Activated T-helper 1 cell treated with anti-CD3 and anti-CD28 coated beads, Interleukin-12 subunit alpha, Interleukin-12 subunit beta, Interleukin-2, Interleukin-4 antibody, amounts not matched to agents 30 ng/mL and 10 ng/mL and 1 ng/mL, durations not matched to agents 14 hours and 24 hours and 36 hours (primary cell): ENCODE measurements at regions of chr1 and their contacts with region 1.

Region 1: GRCh38 chr1:110619412-110620249 is 13.5 kb upstream of the KCNA2 start:
- DNase-seq: peak; percentile 87
- H3K4me3 Mint-ChIP-seq: peak overlapping the region; percentile 83
- H3K27ac Mint-ChIP-seq: peak overlapping the region; percentile 90
- H3K4me1 Mint-ChIP-seq: peaks cover 63% of the 10 kb centered on the region
- H3K27me3 Mint-ChIP-seq: peaks cover 4% of the 10 kb centered on the region

Region 2: GRCh38 chr1:110293601-110294104 is 326.0 kb before region 1 on chr1:
- intact Hi-C with region 1: no loop called
- DNase-seq: no peak
- H3K4me3 Mint-ChIP-seq: no peak overlapping the region
- H3K27ac Mint-ChIP-seq: no peak overlapping the region
- H3K4me1 Mint-ChIP-seq: no peaks in the 10 kb centered on the region
- H3K27me3 Mint-ChIP-seq: peaks cover 9% of the 10 kb centered on the region

Region 3: DNA sequence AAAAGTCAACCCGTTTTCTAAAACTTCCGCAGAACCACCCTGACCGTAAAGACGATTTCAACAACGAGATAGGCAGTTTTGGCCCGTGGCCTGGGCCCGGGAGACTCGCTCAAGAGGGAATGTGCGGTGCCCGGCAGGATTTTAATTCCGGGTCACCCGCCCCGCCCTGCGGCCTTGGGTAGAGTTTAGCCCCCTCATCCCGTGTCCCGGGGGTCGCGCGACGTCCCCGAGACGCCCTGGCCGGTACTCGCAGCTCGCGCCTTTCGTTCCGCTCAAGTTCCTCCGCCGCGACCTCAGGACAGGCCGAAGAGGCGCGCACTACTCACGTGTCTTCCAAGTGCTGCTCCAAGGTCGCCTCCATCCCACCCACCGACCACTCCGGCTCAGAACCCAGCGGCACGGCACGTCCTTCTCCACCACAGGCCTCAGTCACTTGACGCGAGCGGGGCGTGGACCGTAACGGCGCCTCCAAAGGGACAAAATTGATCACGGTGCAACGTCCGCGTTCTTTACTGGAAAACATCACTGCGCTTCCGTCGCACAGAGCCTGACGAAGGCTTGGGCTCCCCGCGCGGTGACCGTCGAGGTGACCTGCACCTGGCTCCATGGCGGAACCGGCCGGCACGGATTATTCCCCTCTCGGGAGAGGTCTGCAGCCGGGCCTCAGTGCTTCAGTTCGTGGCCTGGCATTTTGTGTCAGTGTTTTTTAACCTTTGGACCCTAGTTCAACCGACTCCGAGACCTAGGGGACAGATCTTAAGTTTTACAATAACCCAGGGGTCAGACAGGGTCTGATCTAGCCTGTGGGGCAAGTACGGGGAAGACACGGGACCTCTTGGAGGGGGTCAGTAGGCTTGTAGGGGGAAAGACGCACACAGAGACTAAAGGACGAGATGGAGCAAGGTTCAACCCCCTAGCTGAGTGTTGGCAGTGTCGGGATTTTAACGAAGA is 212.1 kb before region 1 on chr1 and contains the start of gene LAMTOR5:
- intact Hi-C with region 1: loop called (anchors 5 kb)
- DNase-seq: peak; percentile 90
- H3K4me3 Mint-ChIP-seq: peak within 1 kb of the TSS; percentile 100
- H3K27ac Mint-ChIP-seq: peak within 1 kb of the TSS; percentile 100
- H3K4me1 Mint-ChIP-seq: peaks cover 22% of the 10 kb centered on the region
- H3K27me3 Mint-ChIP-seq: no peaks in the 10 kb centered on the region
- total RNA-seq, gene LAMTOR5: 163 and 184 TPM in 2 replicates

Region 4: DNA sequence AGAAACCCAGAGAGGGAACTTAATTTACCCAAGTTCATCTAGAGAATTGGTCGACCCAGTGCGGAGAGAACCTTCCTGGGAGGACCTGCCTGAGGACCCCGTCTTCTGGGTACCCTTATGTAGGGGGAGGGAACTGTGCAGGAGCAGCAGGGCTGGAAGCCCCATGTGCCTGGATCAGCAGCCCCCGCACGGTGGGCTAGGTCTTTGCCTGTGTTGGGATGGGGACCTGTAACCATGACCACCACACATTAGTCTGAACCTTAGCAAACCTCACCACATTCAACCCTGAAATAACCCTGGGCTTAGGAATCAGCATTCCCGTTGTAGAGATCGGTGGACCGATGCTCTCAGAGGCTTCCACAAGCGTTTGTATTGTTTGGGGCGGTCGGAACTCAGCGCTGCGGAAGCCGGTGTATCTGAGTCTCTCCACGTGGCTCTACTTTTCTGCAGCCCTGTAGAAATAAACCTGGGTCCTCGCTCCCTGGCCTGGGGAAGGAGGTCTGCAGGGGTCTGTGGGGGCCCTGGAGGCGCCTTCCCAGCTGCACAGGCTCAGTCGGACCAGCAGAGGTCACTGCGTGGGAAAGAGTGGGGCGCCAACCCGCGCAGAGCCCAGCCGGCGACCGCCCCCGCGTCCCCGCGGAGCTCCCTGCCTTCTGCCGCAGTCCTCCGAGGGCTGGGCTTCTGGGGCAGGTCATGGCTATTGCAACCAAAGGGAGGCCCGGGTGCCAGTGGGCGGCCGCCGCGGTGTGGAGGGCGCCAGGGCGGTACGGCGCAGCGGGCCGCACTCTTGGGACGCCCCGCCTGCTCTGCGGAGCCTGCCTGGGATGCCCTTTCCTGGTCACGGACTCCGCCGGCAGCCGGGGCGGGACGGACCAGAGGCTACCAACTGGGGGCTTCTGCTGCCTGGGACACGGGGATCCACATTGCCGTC is 64.5 kb before region 1 on chr1:
- intact Hi-C with region 1: loop called (anchors 1 kb)
- DNase-seq: peak; percentile 45
- H3K4me3 Mint-ChIP-seq: peak overlapping the region; percentile 7
- H3K27ac Mint-ChIP-seq: no peak overlapping the region
- H3K4me1 Mint-ChIP-seq: no peaks in the 10 kb centered on the region
- H3K27me3 Mint-ChIP-seq: peaks cover 57% of the 10 kb centered on the region

Region 5: GRCh38 chr1:110645821-110646735 is 26.4 kb after region 1 on chr1:
- intact Hi-C with region 1: loop called (anchors 1 kb)
- DNase-seq: no peak
- H3K4me3 Mint-ChIP-seq: peak overlapping the region; percentile 56
- H3K27ac Mint-ChIP-seq: peak overlapping the region; percentile 81
- H3K4me1 Mint-ChIP-seq: peaks cover 53% of the 10 kb centered on the region
- H3K27me3 Mint-ChIP-seq: no peaks in the 10 kb centered on the region

Region 6: DNA sequence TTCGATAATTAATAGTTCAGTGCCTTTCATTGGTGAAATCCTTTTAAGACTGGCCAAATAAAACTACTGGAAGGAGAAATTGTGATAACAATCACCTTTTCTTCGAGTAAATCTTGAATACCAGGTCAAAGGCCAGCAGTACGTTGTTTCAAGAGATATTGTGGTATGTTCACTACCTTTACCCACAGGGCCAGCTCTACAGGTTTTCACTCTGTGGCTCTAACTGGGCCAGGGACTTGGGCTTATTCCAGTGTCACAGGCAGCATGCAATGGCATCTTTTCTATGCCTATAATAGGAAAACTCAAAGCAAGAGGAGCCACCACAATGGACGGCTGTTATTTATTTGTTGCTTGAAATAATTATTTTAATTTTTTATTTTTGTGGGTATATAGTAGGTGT is 370.9 kb after region 1 on chr1:
- intact Hi-C with region 1: loop called (anchors 10 kb)
- DNase-seq: no peak
- H3K4me3 Mint-ChIP-seq: no peak overlapping the region
- H3K27ac Mint-ChIP-seq: no peak overlapping the region
- H3K4me1 Mint-ChIP-seq: peaks cover 5% of the 10 kb centered on the region
- H3K27me3 Mint-ChIP-seq: peaks cover 25% of the 10 kb centered on the region